A673 (cell line): ENCODE measurements at regions of chr15 and their contacts with region 1.

Region 1: GRCh38 chr15:88904624-88905327 is 8.4 kb downstream of the MFGE8 start:
- DNase-seq: peak; percentile 82
- H3K4me3 ChIP-seq: no peak overlapping the region
- H3K27ac ChIP-seq: no peak overlapping the region
- H3K4me1 ChIP-seq: peaks cover 3% of the 10 kb centered on the region
- H3K27me3 ChIP-seq: no peaks in the 10 kb centered on the region
- CTCF ChIP-seq: peak; percentile 96

Region 2: GRCh38 chr15:88605189-88606069 is 299.3 kb before region 1 on chr15:
- CTCF ChIA-PET with region 1: no interaction called
- POLR2A ChIA-PET with region 1: no interaction called
- intact Hi-C with region 1: no loop called
- DNase-seq: peak; percentile 63
- H3K4me3 ChIP-seq: no peak overlapping the region
- H3K27ac ChIP-seq: no peak overlapping the region
- H3K4me1 ChIP-seq: no peaks in the 10 kb centered on the region
- H3K27me3 ChIP-seq: peaks cover 84% of the 10 kb centered on the region
- CTCF ChIP-seq: no peak

Region 3: GRCh38 chr15:88932271-88932874 is 27.6 kb after region 1 on chr15:
- CTCF ChIA-PET with region 1: no interaction called
- POLR2A ChIA-PET with region 1: no interaction called
- intact Hi-C with region 1: no loop called
- DNase-seq: no peak
- H3K4me3 ChIP-seq: no peak overlapping the region
- H3K27ac ChIP-seq: no peak overlapping the region
- H3K4me1 ChIP-seq: no peaks in the 10 kb centered on the region
- H3K27me3 ChIP-seq: no peaks in the 10 kb centered on the region
- CTCF ChIP-seq: no peak

Region 4: GRCh38 chr15:88995449-88995848 is 90.7 kb after region 1 on chr15:
- CTCF ChIA-PET with region 1: interaction called, 10 read pairs
- POLR2A ChIA-PET with region 1: interaction called, 11 read pairs
- intact Hi-C with region 1: no loop called
- DNase-seq: peak; percentile 16
- H3K4me3 ChIP-seq: no peak overlapping the region
- H3K27ac ChIP-seq: no peak overlapping the region
- H3K4me1 ChIP-seq: no peaks in the 10 kb centered on the region
- H3K27me3 ChIP-seq: no peaks in the 10 kb centered on the region
- CTCF ChIP-seq: no peak

Region 5: DNA sequence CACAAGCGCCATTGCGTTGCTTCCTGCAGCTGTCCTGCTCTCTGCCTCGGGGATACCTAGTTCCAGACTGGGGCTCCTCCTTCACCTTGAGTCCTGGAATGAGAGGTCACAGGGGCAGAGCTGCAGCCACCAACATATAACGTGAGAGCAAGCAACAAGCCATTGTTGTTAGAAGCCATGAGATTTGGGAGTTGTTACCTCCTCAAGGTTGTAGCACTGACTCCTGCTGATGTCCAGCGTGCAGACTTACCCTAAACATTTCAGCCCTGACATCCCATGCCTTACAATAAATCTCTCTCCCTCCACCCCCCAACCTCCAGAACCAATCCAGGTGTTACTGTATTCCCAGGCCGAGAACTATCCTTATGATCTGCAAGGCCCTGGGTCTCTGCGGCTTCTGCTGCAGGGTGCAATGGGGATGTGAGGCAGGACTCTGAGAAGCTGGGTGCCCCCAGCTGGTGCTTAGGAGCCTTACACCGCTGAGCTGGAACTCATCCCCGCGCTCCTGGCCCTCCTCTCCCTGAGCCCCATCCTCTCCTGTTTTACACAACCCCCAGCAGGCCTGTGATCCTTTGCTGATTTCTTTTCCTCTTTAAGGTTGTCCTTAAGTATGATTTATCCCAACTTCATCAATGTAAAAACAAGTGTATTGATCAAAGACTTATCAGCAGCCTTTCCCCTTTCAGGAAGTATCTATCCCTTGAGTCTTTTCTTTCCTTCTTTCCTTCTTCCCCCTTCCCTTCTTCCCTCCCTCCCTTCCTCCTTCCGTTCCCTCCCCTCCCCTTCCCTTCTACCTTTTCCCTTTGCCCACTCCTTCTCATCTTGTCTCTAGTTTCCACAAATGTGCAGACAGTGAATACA is 99.3 kb after region 1 on chr15:
- CTCF ChIA-PET with region 1: interaction called, 14 read pairs
- POLR2A ChIA-PET with region 1: interaction called, 11 read pairs
- intact Hi-C with region 1: no loop called
- DNase-seq: peak; percentile 56
- H3K4me3 ChIP-seq: no peak overlapping the region
- H3K27ac ChIP-seq: no peak overlapping the region
- H3K4me1 ChIP-seq: no peaks in the 10 kb centered on the region
- H3K27me3 ChIP-seq: no peaks in the 10 kb centered on the region
- CTCF ChIP-seq: peak; percentile 58

Region 6: DNA sequence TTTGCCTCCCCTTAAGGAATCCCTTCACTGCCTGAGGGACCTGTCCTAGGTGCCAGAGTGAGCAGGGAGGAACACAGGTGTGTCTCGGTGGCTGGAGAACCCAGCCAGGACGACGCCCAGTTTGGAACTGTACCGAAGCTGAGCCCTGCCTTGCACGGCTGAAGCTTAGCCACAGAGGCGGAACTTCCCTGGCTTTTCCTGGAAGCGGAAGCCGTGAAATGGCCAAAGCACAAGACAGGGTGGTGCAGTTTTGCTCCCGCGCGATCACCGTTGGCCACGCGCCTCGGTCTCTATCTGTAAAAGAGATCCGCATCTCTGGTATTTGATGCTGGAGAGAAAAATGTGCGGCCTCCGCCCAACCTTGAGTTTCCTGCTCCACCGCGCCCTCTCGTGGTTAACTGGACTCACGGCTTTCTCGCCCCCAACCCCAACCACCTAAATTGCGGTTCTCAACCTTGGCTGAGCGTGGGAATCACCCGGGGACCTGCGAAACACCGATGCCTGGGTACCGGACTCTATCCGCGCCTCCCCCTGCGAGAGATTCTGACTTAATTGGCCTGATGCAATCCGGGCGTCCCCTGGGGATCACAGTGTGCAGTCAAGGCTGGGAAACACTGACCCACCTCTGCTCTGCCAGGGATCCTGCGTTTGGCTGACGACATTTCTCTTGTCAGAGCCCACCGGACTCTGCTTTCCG is 112.7 kb after region 1 on chr15:
- CTCF ChIA-PET with region 1: interaction called, 5 read pairs
- POLR2A ChIA-PET with region 1: no interaction called
- intact Hi-C with region 1: loop called (anchors 1 kb)
- DNase-seq: peak; percentile 83
- H3K4me3 ChIP-seq: peak overlapping the region; percentile 28
- H3K27ac ChIP-seq: no peak overlapping the region
- H3K4me1 ChIP-seq: peaks cover 7% of the 10 kb centered on the region
- H3K27me3 ChIP-seq: peaks cover 9% of the 10 kb centered on the region
- CTCF ChIP-seq: peak; percentile 91